ENCODE measurements at regions of chr12 and their contacts with region 1.

Region 1: DNA sequence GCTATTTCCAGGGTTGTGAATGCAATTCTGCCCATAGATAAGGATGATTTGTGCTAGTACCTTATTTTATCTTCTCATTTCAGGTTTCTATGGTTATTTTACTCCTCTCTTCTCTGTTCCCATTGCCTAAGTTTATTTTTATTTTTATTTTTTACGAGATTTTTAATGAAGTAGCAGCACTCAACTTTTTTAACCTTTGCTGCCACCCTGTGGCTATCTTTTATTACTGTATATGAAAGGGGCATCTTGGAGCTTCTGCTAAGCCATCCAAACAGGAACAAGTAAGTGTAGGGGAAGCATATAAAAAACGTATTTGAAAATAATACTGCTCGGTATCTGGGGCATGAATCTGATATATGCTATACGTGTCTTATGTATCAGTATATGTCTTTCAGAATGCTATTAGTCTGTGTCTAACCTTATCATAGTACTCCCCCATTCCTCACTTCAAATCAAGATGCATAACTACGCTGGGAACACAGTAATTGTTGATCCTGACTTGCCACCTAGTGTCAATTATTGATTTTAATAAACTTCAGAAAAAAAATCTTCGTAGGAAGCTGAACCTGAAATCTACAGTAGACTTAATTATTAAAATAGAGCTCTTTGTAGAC is 60.3 kb downstream of the KLRG1 start:
- ATAC-seq: peak in 4 of 8 experiments; percentile 49 to 79 (median 70)
- H3K4me3 ChIP-seq: no peak overlapping the region
- H3K27ac ChIP-seq: no peak overlapping the region
- H3K4me1 ChIP-seq: no peaks in the 10 kb centered on the region

Region 2: DNA sequence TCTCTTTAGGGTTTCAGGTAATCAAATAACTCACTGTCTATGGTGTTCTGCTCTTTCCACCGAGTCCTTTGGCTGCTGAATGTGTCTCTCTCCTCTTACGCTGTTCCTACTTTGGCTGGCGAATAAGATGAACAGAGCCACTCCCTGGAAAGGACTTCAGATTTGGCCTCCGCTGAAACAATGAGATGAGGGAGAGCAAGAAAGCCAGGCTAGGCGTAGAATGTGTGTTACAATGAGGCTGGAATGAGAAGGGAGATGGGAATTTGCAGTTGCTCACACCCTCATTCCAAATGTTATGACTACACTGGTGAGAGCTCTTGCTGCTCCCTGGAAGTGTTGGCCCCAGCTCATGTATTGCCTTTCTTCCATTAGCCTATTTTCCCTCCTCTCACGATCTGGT is 387.0 kb before region 1 on chr12 and contains the start of gene MFAP5:
- in situ Hi-C with region 1: loop called in 3 of 9 experiments (anchors 10 to 25 kb)
- ATAC-seq: peak in 2 of 8 experiments; percentile 71 to 83
- H3K4me3 ChIP-seq: no peak within 1 kb of the TSS
- H3K27ac ChIP-seq: no peak within 1 kb of the TSS
- H3K4me1 ChIP-seq: no peaks in the 10 kb centered on the region
- total RNA-seq, gene MFAP5: 0.66 to 1.9 (median 0.81) TPM in 5 of 8 experiments, not detected in the others

Measured in motor neuron (in vitro differentiated cells).